ENCODE measurements at regions of chr12 and their contacts with region 1.

Region 1: GRCh38 chr12:128966203-128966810 is 113.0 kb downstream of the GLT1D1 start:
- H3K4me3 ChIP-seq: no peak overlapping the region
- H3K27ac ChIP-seq: no peak overlapping the region
- H3K4me1 ChIP-seq: no peaks in the 10 kb centered on the region
- CTCF ChIP-seq: no peak

Region 2: GRCh38 chr12:128982933-128983332 is 16.6 kb after region 1 on chr12:
- CTCF ChIA-PET with region 1: no interaction called
- POLR2A ChIA-PET with region 1: no interaction called
- H3K4me3 ChIP-seq: no peak overlapping the region
- H3K27ac ChIP-seq: no peak overlapping the region
- H3K4me1 ChIP-seq: no peaks in the 10 kb centered on the region
- CTCF ChIP-seq: no peak

Region 3: GRCh38 chr12:130474599-130475269 is 1508.4 kb after region 1 on chr12:
- CTCF ChIA-PET with region 1: no interaction called
- POLR2A ChIA-PET with region 1: interaction called, 12 read pairs
- H3K4me3 ChIP-seq: no peak overlapping the region
- H3K27ac ChIP-seq: no peak overlapping the region
- H3K4me1 ChIP-seq: no peaks in the 10 kb centered on the region
- CTCF ChIP-seq: no peak

Measured in HEK293 (cell line).